ENCODE measurements at regions of chr3 and their contacts with region 1.

Region 1: GRCh38 chr3:41525303-41526064 is 326.2 kb downstream of the CTNNB1 start:
- DNase-seq: no peak
- H3K4me3 Mint-ChIP-seq: no peak overlapping the region
- H3K27ac Mint-ChIP-seq: no peak overlapping the region
- H3K4me1 Mint-ChIP-seq: peaks cover 2% of the 10 kb centered on the region
- H3K27me3 Mint-ChIP-seq: no peaks in the 10 kb centered on the region

Region 2: GRCh38 chr3:41095702-41096101 is 429.8 kb before region 1 on chr3:
- intact Hi-C with region 1: no loop called
- DNase-seq: no peak
- H3K4me3 Mint-ChIP-seq: no peak overlapping the region
- H3K27ac Mint-ChIP-seq: no peak overlapping the region
- H3K4me1 Mint-ChIP-seq: no peaks in the 10 kb centered on the region
- H3K27me3 Mint-ChIP-seq: no peaks in the 10 kb centered on the region

Region 3: GRCh38 chr3:42106646-42107045 is 581.2 kb after region 1 on chr3:
- intact Hi-C with region 1: loop called (anchors 5 kb)
- DNase-seq: no peak
- H3K4me3 Mint-ChIP-seq: no peak overlapping the region
- H3K27ac Mint-ChIP-seq: no peak overlapping the region
- H3K4me1 Mint-ChIP-seq: peaks cover 7% of the 10 kb centered on the region
- H3K27me3 Mint-ChIP-seq: no peaks in the 10 kb centered on the region